ENCODE measurements at regions of chr22 and their contacts with region 1.

Region 1: GRCh38 chr22:20418211-20418788 is 19.3 kb downstream of the SCARF2 start:
- DNase-seq: peak; percentile 57
- H3K4me3 ChIP-seq: peak overlapping the region; percentile 34
- H3K27ac ChIP-seq: no peak overlapping the region
- H3K4me1 ChIP-seq: peaks cover 7% of the 10 kb centered on the region
- H3K27me3 ChIP-seq: no peaks in the 10 kb centered on the region
- CTCF ChIP-seq: peak; percentile 80

Region 2: GRCh38 chr22:20456064-20456721 is 37.9 kb after region 1 on chr22:
- intact Hi-C with region 1: loop called (anchors 2 kb)
- DNase-seq: peak; percentile 62
- H3K4me3 ChIP-seq: no peak overlapping the region
- H3K27ac ChIP-seq: no peak overlapping the region
- H3K4me1 ChIP-seq: no peaks in the 10 kb centered on the region
- H3K27me3 ChIP-seq: no peaks in the 10 kb centered on the region
- CTCF ChIP-seq: peak; percentile 93

Region 3: GRCh38 chr22:20568989-20569769 is 150.9 kb after region 1 on chr22:
- intact Hi-C with region 1: loop called (anchors 10 kb)
- DNase-seq: no peak
- H3K4me3 ChIP-seq: no peak overlapping the region
- H3K27ac ChIP-seq: no peak overlapping the region
- H3K4me1 ChIP-seq: peaks cover 6% of the 10 kb centered on the region
- H3K27me3 ChIP-seq: no peaks in the 10 kb centered on the region
- CTCF ChIP-seq: no peak